BJ (cell line): ENCODE measurements at regions of chr12 and their contacts with region 1.

Region 1: DNA sequence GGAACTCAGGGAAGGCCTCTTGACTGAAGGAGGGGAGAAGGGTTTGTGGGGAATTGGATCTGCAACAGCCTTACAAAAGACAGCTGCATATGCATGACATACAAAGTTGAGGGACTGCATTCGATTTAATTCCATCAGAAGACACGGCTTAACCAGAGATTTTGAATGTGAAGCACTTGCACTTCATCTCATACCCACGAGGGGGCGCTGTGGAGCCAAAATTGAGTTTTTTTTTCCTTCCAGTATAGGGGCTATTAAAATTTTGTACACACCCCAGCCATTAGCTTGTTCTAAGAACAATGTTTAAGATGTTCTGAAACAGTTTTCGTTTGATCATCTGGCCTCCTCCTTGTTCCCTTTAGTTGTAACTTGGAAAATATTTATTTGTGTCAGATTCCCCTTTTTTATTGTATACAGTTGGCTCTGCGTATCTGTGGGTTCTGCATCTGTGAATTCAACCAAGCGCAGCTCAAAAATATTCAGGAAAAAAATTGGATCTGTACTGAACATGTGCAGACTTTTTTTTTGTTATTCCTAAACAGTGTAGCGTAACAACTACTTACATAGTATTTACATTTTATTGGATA is 1.6 kb downstream of the SUDS3 start:
- DNase-seq: no peak
- H3K4me3 ChIP-seq: peak overlapping the region; percentile 86
- H3K27me3 ChIP-seq: no peaks in the 10 kb centered on the region
- CTCF ChIP-seq: peak; percentile 91

Region 2: DNA sequence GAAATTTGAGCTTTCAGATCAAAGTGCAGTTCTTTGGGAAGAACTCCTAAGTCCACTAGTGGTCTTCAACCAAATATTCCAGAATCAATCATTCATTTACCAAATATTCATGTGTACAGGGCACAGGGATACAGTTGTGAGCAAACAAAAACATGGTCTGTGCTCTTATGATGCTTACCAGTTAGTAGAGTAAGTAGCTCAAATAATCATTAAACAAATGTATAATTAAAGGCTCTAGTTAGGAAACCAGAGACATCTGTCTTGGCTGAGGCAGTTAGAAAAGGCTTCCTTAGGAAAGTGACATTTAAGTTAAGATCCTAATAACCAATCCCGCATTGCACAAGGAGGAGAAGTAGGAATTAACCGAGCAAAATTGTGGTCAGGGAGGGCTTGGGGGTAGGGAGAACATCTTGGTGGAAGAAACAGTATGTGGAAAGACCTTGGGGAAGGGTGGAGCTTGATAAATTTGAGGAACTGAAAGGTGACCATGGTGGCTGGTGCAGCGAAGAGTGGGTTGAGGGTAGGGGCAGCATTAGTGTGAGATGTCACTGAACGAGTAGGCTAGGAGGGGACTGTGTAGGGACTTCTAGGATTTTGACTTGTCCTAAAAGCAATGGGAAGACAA is 202.0 kb before region 1 on chr12:
- CTCF ChIA-PET with region 1: interaction called, 226 read pairs
- POLR2A ChIA-PET with region 1: no interaction called
- DNase-seq: no peak
- H3K4me3 ChIP-seq: no peak overlapping the region
- H3K27me3 ChIP-seq: no peaks in the 10 kb centered on the region
- CTCF ChIP-seq: no peak

Region 3: GRCh38 chr12:118391424-118391823 is 13.4 kb after region 1 on chr12:
- CTCF ChIA-PET with region 1: interaction called, 45 read pairs
- POLR2A ChIA-PET with region 1: no interaction called
- DNase-seq: no peak
- H3K4me3 ChIP-seq: no peak overlapping the region
- H3K27me3 ChIP-seq: no peaks in the 10 kb centered on the region
- CTCF ChIP-seq: no peak

Region 4: DNA sequence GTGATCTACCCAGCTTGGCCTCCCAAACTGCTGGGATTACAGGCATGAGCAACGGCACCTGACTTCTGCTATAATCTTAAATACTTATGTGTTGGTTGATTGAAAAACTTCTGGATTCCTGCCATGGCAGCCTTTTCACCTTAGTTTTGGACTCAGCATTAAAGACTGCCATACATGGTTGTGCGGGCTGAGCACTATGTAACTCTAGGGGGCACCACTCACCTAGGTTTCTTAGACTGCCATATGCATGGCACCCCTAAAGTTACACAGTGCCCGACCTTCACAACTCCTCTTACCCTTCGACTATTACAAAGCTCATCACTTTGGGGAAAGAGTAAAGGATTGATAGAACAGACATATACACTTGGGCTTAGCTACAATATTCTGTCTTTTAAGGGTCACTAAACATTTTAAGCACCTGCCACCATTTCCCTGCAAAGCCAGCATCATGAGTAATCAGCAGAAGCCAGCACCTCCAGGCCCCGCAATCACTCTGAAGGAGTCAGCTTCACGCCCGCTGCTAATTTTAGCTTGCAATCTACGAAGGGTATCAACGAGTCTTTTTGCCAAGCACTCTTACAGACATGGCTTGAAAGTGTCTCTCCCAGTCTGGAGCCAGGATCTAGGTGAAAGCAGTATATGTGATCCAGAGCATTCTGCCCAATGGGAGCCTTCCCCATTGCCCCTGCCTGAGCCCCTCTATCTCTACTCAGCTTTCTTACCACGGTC is 58.2 kb after region 1 on chr12:
- CTCF ChIA-PET with region 1: no interaction called
- POLR2A ChIA-PET with region 1: no interaction called
- DNase-seq: no peak
- H3K4me3 ChIP-seq: no peak overlapping the region
- H3K27me3 ChIP-seq: no peaks in the 10 kb centered on the region
- CTCF ChIP-seq: 0 out of 2 replicates have a peak, but pooled peaks have one; percentile 13

Region 5: DNA sequence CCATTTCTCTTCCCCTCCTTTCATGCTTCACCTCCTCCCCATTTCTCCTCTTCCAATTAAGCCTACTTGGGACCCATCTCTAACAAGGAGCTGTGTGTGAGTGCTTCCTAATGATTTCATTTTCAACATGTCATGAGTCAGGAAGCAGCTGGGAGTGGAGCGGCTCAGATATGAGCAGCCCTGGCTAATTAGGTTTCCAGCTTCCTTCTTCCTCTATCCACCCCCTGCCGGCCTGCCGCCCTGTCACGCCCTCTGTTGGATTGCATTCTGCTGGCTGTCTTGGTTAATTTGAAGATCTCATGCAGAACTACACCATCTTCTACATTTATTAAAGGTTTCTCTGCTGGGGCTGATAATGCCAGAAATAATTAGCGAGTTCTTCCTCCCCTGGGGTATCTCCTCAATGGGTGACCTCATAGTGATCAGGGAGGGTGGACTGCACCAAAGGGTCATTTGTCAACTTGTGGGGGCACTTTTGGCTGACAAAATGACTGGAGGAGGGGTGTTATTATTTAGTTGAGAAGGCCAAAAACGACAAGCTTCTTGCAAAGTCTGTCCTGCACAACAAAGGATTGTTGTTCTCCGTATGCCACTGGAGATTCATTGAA is 302.5 kb after region 1 on chr12:
- CTCF ChIA-PET with region 1: no interaction called
- POLR2A ChIA-PET with region 1: no interaction called
- DNase-seq: no peak
- H3K4me3 ChIP-seq: no peak overlapping the region
- H3K27me3 ChIP-seq: no peaks in the 10 kb centered on the region
- CTCF ChIP-seq: no peak